Caco-2 (cell line): ENCODE measurements at regions of chr3 and their contacts with region 1.

Region 1: DNA sequence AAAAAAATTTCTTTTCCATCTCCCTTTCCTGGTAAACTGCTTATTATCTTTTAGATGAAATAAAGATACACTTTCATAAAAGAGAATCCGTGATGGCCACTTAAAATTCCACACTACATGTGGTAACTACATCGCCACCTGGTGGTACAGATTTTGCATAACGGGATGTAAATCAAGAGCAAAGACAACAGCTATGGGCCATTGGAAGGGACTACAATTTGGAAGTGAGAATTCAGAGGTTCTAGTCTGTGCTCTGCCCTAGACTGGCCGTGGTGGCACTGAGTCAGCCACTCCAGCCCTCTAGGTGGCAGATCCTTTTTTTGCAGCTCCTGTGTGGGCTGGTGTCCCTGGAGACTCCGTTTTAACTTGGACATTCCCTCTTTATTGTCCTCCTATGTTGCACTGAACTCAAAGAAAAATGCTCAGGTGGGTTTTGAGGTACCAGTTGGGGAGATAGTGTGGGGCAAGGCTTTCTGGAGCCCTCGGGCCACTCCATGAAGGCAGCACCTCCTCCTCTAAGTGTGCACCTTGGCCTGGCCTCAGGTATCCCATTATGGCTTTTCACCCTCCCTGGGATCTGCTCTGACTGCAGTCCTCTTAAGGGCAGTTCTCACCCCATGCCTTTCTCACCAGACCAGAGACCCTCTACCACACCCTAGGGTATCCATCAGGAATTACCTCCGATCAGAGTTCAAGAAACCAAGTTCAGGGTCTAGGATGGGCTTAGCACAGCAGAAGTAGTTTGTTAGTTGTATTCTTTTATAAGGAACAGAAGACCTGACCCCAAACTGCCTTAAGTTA is 54.9 kb downstream of the SPSB4 start:
- DNase-seq: peak; percentile 75
- H3K4me3 ChIP-seq: no peak overlapping the region
- H3K4me3 Mint-ChIP-seq: no peak overlapping the region
- H3K27ac Mint-ChIP-seq: no peak overlapping the region
- H3K4me1 ChIP-seq: peaks cover 8% of the 10 kb centered on the region; the same call in 1 of the 2 replicates
- H3K4me1 Mint-ChIP-seq: peaks cover 13% of the 10 kb centered on the region
- H3K27me3 ChIP-seq: no peaks in the 10 kb centered on the region
- H3K27me3 Mint-ChIP-seq: no peaks in the 10 kb centered on the region
- CTCF ChIP-seq: peak; percentile 68 to 75

Region 2: DNA sequence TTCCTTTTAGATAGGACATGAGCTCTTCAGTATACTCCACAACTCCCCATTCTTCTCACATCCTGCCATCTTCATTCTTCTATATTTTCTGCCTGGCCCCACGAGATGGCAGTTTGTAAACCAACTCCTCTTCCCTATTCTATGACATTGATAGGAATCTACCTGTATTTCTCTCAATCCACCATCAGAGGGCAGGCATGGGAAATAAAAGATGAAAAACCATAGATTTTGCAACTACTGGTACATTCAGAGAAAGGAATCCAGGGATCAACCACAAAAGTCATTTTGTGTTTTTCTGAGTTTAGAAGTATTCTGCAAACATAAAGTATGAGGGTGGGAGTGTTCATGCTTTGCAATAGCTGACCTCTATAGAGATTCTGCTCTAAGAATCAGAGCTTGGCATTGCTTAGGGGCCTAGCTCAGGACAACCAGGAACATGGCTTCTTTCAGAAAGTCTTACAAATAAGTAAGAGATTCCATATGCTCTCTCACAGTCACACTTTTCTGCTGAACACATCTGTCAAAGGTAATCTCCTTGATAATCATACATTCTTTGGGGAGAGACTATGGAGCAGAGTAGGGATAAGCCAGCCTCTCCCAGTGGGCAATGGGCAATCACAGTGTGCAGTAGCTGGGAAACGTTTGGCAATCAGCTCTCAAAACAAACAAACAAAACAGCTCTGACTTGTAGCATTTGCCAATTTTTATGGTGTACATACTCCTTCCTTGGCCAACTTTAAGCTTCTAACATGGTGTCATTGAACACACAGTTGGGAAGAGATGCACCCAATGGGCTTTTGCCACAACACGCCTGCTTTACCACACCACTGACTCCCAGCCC is 207.5 kb before region 1 on chr3:
- CTCF ChIA-PET with region 1: no interaction called
- POLR2A ChIA-PET with region 1: no interaction called
- intact Hi-C with region 1: loop called (anchors 2 kb)
- DNase-seq: peak in 1 of 2 experiments; percentile 70
- H3K4me3 ChIP-seq: no peak overlapping the region
- H3K4me3 Mint-ChIP-seq: no peak overlapping the region
- H3K27ac Mint-ChIP-seq: no peak overlapping the region
- H3K4me1 ChIP-seq: no peaks in the 10 kb centered on the region
- H3K4me1 Mint-ChIP-seq: no peaks in the 10 kb centered on the region
- H3K27me3 ChIP-seq: no peaks in the 10 kb centered on the region
- H3K27me3 Mint-ChIP-seq: peaks cover 13% of the 10 kb centered on the region
- CTCF ChIP-seq: peak; percentile 49 to 62

Region 3: GRCh38 chr3:141000027-141000663 is 105.9 kb before region 1 on chr3:
- CTCF ChIA-PET with region 1: interaction called, 11 read pairs
- POLR2A ChIA-PET with region 1: no interaction called
- intact Hi-C with region 1: loop called (anchors 1 kb)
- DNase-seq: peak; percentile 64 to 72
- H3K4me3 ChIP-seq: no peak overlapping the region
- H3K4me3 Mint-ChIP-seq: no peak overlapping the region
- H3K27ac Mint-ChIP-seq: no peak overlapping the region
- H3K4me1 ChIP-seq: peaks cover 10% of the 10 kb centered on the region
- H3K4me1 Mint-ChIP-seq: no peaks in the 10 kb centered on the region
- H3K27me3 ChIP-seq: no peaks in the 10 kb centered on the region
- H3K27me3 Mint-ChIP-seq: no peaks in the 10 kb centered on the region
- CTCF ChIP-seq: peak; percentile 50 to 76

Region 4: DNA sequence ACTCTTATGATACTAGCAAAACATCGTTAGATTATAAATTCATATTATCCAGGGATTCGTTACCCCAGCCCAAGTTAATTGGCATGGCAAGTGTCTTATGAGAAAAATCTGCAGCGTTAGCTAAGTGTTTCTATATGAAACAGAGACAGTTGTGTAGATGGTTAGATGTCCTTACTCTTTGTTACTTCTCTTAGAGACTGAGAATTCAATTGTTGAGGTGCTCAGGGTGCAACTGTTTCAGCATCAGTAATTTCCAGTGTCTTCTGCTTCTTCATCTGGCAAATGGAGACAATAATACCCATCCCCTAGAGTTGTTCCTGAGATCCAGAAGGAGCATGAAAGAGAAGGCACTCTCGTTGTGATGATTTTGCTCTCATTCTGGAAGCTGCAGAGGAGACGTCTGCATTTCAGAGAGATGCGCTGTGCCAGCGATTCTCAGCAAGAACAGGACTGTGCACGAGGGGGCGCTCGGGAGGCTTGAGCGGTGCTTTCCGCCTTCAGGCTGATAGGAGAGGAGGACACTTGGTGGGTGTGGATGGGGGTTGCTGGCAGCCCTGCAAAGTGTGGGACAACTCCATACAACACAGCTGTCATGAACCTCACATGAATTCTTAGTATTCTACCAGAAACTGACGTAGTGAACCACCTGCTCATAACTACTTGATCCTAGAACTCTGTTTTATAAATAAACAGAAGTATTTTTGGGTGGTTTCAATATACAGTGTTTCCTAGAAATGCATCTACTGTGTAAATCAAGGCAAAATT is 94.6 kb before region 1 on chr3:
- CTCF ChIA-PET with region 1: interaction called, 7 read pairs
- POLR2A ChIA-PET with region 1: no interaction called
- intact Hi-C with region 1: loop called (anchors 1 kb)
- DNase-seq: peak; percentile 76 to 85
- H3K4me3 ChIP-seq: no peak overlapping the region
- H3K4me3 Mint-ChIP-seq: no peak overlapping the region
- H3K27ac Mint-ChIP-seq: no peak overlapping the region
- H3K4me1 ChIP-seq: no peaks in the 10 kb centered on the region
- H3K4me1 Mint-ChIP-seq: no peaks in the 10 kb centered on the region
- H3K27me3 ChIP-seq: no peaks in the 10 kb centered on the region
- H3K27me3 Mint-ChIP-seq: no peaks in the 10 kb centered on the region
- CTCF ChIP-seq: peak; percentile 78 to 91

Region 5: GRCh38 chr3:141049681-141050080 is 56.3 kb before region 1 on chr3:
- CTCF ChIA-PET with region 1: interaction called, 3 read pairs
- POLR2A ChIA-PET with region 1: no interaction called
- intact Hi-C with region 1: loop called (anchors 2 kb)
- DNase-seq: peak in 1 of 2 experiments; percentile 23
- H3K4me3 ChIP-seq: no peak overlapping the region
- H3K4me3 Mint-ChIP-seq: no peak overlapping the region
- H3K27ac Mint-ChIP-seq: no peak overlapping the region
- H3K4me1 ChIP-seq: no peaks in the 10 kb centered on the region
- H3K4me1 Mint-ChIP-seq: no peaks in the 10 kb centered on the region
- H3K27me3 ChIP-seq: no peaks in the 10 kb centered on the region
- H3K27me3 Mint-ChIP-seq: peaks cover 3% of the 10 kb centered on the region
- CTCF ChIP-seq: peak in 1 of 2 experiments; percentile 18

Region 6: DNA sequence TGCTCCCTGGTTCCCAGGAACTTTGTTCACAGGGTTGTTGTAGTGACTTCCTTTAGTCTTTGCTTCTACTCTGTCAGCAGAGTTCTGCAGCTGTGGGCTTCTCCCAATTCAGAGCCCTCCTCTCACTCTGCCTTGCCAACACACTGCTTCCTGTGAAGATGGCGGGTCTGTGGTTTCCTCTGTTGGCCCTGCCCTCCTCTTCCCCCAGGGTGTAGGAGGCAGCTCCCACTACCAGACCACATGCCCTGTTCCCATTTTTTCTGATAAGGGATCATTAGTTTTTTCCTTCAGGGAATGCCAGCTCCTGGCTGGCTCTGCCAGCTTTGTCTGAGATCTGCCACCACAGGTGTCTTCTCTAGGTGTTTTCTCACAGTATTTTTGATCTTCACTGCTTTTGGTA is 42.2 kb before region 1 on chr3:
- CTCF ChIA-PET with region 1: no interaction called
- POLR2A ChIA-PET with region 1: no interaction called
- intact Hi-C with region 1: loop called (anchors 5 kb)
- DNase-seq: no peak
- H3K4me3 ChIP-seq: no peak overlapping the region
- H3K4me3 Mint-ChIP-seq: no peak overlapping the region
- H3K27ac Mint-ChIP-seq: no peak overlapping the region
- H3K4me1 ChIP-seq: no peaks in the 10 kb centered on the region
- H3K4me1 Mint-ChIP-seq: no peaks in the 10 kb centered on the region
- H3K27me3 ChIP-seq: no peaks in the 10 kb centered on the region
- H3K27me3 Mint-ChIP-seq: no peaks in the 10 kb centered on the region
- CTCF ChIP-seq: no peak

Region 7: GRCh38 chr3:141192345-141192744 is 86.3 kb after region 1 on chr3:
- CTCF ChIA-PET with region 1: interaction called, 3 read pairs
- POLR2A ChIA-PET with region 1: no interaction called
- intact Hi-C with region 1: loop called (anchors 1 kb)
- DNase-seq: peak; percentile 95 to 97
- H3K4me3 ChIP-seq: no peak overlapping the region
- H3K4me3 Mint-ChIP-seq: no peak overlapping the region
- H3K27ac Mint-ChIP-seq: no peak overlapping the region
- H3K4me1 ChIP-seq: no peaks in the 10 kb centered on the region
- H3K4me1 Mint-ChIP-seq: no peaks in the 10 kb centered on the region
- H3K27me3 ChIP-seq: no peaks in the 10 kb centered on the region
- H3K27me3 Mint-ChIP-seq: peaks cover 11% of the 10 kb centered on the region
- CTCF ChIP-seq: peak; percentile 98

Region 8: GRCh38 chr3:141255846-141256261 is 149.8 kb after region 1 on chr3:
- CTCF ChIA-PET with region 1: no interaction called
- POLR2A ChIA-PET with region 1: no interaction called
- intact Hi-C with region 1: no loop called
- DNase-seq: peak in 1 of 2 experiments; percentile 30
- H3K4me3 ChIP-seq: no peak overlapping the region
- H3K4me3 Mint-ChIP-seq: no peak overlapping the region
- H3K27ac Mint-ChIP-seq: no peak overlapping the region
- H3K4me1 ChIP-seq: no peaks in the 10 kb centered on the region
- H3K4me1 Mint-ChIP-seq: no peaks in the 10 kb centered on the region
- H3K27me3 ChIP-seq: no peaks in the 10 kb centered on the region
- H3K27me3 Mint-ChIP-seq: no peaks in the 10 kb centered on the region
- CTCF ChIP-seq: peak in 1 of 2 experiments; percentile 30